Breast epithelium (tissue), 4 donors: ENCODE measurements at regions of chr4 and their contacts with region 1.

Region 1: DNA sequence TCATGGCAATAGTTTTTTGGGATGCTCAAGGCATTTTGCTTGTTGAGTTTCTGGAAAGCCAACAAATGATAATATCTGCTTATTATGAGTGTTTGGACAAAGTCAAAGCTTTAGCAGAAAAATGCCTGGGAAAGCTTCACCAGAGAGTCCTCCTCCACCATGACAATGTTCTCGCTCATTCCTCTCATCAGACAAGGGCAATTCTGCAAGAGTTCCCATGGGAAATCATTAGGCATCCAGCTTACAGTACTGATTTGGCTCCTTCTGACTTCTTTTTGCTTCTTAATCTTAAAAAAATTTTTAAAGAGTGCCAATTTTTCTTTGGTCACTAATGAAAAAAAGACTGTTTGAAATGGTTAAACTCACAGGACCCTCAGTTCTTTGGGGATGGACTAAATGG is 136.3 kb downstream of the UBE2K start:
- DNase-seq: no peak
- H3K4me3 ChIP-seq: no peak overlapping the region
- H3K27ac ChIP-seq: no peak overlapping the region
- H3K4me1 ChIP-seq: no peaks in the 10 kb centered on the region
- H3K27me3 ChIP-seq: no peaks in the 10 kb centered on the region
- CTCF ChIP-seq: no peak
- POLR2A ChIP-seq: no peak

Region 2: GRCh38 chr4:39237179-39237578 is 597.1 kb before region 1 on chr4:
- intact Hi-C with region 1: loop called (anchors 5 kb)
- DNase-seq: no peak
- H3K4me3 ChIP-seq: no peak overlapping the region
- H3K27ac ChIP-seq: no peak overlapping the region
- H3K4me1 ChIP-seq: no peaks in the 10 kb centered on the region
- H3K27me3 ChIP-seq: no peaks in the 10 kb centered on the region
- CTCF ChIP-seq: no peak
- POLR2A ChIP-seq: no peak

Region 3: DNA sequence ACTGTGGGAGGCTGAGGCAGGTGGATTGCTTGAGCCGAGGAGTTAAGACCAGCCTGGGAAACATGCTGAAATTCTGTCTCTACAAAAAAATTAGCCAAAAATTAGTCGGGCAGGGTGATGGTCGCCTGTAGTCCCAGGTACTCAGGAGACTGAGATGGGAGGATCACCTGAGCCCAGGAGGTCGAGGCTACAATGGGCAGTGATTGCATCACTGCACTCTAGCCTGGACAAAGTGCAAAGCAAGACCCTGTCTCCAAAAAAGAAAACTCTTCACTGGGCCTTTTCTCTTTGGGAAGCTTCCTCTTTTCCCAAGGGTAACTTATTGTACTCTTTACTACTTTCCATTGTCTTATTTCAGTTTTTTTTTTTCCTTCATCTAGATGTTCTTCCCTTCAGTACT is 47.4 kb before region 1 on chr4:
- intact Hi-C with region 1: no loop called
- DNase-seq: no peak
- H3K4me3 ChIP-seq: no peak overlapping the region
- H3K27ac ChIP-seq: no peak overlapping the region
- H3K4me1 ChIP-seq: no peaks in the 10 kb centered on the region
- H3K27me3 ChIP-seq: no peaks in the 10 kb centered on the region
- CTCF ChIP-seq: no peak
- POLR2A ChIP-seq: no peak

Region 4: GRCh38 chr4:41287050-41287449 is 1452.8 kb after region 1 on chr4:
- intact Hi-C with region 1: no loop called
- DNase-seq: no peak
- H3K4me3 ChIP-seq: no peak overlapping the region
- H3K27ac ChIP-seq: no peak overlapping the region
- H3K4me1 ChIP-seq: no peaks in the 10 kb centered on the region
- H3K27me3 ChIP-seq: no peaks in the 10 kb centered on the region
- CTCF ChIP-seq: no peak
- POLR2A ChIP-seq: no peak